Prostate gland (tissue), 2 donors: ENCODE measurements at regions of chr6 and their contacts with region 1.

Region 1: GRCh38 chr6:80457439-80457933 is 351.0 kb downstream of the BCKDHB start:
- DNase-seq: peak; percentile 65
- H3K4me3 ChIP-seq: no peak overlapping the region
- H3K27ac ChIP-seq: no peak overlapping the region
- H3K4me1 ChIP-seq: no peaks in the 10 kb centered on the region
- H3K27me3 ChIP-seq: no peaks in the 10 kb centered on the region
- CTCF ChIP-seq: no peak
- POLR2A ChIP-seq: no peak

Region 2: DNA sequence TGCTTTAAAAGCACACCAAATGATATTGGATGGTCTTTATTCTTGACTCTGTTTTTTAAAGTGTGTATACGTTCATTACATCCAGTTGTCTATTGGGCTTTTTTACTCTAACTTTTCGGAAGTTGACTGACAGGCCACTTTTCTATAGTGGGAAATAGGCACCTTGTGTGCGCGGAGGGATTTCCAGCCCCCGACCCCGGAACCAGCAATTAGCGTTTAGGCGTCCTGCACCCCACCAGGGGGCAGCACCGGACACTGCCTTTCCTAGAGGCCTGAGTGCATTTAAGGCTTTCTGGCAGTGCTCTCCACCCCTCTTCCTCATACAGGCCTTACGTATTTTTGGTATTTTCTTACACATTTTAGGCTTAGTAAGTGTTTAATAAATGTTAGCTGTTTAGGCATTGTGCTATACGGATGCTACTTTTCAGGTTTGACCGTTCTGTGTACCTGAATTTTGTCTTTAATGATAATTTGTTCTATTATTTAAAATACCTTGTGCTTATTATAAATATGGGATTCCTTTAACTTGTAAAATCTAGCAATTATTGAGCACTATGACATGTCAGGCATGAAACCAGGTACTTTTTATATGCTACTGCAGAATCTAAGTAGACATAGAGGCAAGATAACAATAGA is 119.2 kb before region 1 on chr6:
- intact Hi-C with region 1: loop called (anchors 10 kb)
- DNase-seq: no peak
- H3K4me3 ChIP-seq: no peak overlapping the region
- H3K27ac ChIP-seq: no peak overlapping the region
- H3K4me1 ChIP-seq: no peaks in the 10 kb centered on the region
- H3K27me3 ChIP-seq: no peaks in the 10 kb centered on the region
- CTCF ChIP-seq: peak in 3 of 4 experiments; percentile 3 to 42 (median 42)
- POLR2A ChIP-seq: no peak